Dendritic cell treated with granulocyte-macrophage colony-stimulating factor and Interleukin-4, amounts not matched to agents 40 ng/mL and 50 ng/mL, for 4 days (primary cell): ENCODE measurements at regions of chr11 and their contacts with region 1.

Region 1: DNA sequence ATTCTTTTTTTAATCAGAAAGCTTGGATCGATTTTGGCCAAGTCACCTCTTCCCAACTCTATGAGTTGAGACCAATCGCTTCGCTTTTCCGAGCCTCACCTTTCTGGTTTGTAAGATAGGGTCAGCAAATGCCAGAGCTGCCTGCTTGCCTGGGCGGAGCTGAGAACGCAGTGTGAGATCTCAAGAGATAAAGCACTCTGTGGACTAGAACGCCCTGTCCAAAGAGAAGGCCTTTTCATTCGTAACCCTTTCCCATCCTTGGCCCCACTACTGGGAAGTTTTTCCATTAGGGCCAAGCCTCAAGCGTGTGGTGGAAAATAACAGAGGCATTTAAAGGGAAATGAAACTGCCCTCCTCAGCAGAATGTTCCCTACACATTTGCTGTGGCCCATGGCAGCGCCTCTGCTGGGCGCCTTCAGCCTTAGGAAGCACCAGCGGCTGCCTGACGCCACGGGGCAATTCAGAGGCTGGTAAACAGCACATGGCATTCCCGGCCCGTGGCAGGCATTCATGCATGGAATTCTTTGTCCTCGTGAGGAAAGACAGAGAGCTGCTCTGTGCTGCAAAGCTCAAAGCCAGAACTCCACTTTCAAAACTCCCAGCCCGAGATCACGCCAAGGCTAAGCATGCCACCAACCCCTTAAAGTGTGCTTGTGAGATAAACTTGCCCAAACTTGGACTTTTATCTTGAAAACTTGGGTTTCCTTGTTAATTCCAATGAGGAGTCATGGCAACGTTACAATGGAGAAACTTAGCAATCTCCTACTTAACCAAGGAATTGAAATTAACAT is 38.1 kb downstream of the AHNAK start:
- H3K4me3 Mint-ChIP-seq: no peak overlapping the region
- H3K27ac Mint-ChIP-seq: peak overlapping the region; percentile 78
- H3K4me1 Mint-ChIP-seq: peaks cover 79% of the 10 kb centered on the region
- H3K27me3 Mint-ChIP-seq: peaks cover 3% of the 10 kb centered on the region

Region 2: DNA sequence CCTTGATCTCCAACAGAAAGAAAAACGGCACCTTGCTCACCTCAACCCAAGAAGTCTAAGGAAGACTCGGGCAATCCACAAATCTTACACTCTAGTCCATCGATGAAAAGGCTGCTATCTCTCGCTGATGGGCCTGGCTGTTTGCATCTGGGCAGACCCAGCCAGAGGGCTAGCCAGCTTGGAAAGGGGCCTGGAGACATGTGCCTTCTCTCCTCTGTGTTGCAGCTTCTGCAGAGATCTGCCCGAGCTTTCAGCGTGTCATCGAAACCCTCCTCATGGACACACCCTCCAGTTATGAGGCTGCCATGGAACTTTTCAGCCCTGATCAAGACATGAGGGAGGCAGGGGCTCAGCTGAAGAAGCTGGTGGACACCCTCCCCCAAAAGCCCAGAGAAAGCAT is 86.5 kb before region 1 on chr11:
- intact Hi-C with region 1: loop called (anchors 5 kb)
- H3K4me3 Mint-ChIP-seq: no peak overlapping the region
- H3K27ac Mint-ChIP-seq: peak overlapping the region; percentile 49
- H3K4me1 Mint-ChIP-seq: peaks cover 70% of the 10 kb centered on the region
- H3K27me3 Mint-ChIP-seq: peaks cover 6% of the 10 kb centered on the region